HEK293T (cell line): ENCODE measurements at regions of chr12 and their contacts with region 1.

Region 1: GRCh38 chr12:116099652-116100432 is 177.7 kb downstream of the MED13L start:
- DNase-seq: no peak

Region 2: DNA sequence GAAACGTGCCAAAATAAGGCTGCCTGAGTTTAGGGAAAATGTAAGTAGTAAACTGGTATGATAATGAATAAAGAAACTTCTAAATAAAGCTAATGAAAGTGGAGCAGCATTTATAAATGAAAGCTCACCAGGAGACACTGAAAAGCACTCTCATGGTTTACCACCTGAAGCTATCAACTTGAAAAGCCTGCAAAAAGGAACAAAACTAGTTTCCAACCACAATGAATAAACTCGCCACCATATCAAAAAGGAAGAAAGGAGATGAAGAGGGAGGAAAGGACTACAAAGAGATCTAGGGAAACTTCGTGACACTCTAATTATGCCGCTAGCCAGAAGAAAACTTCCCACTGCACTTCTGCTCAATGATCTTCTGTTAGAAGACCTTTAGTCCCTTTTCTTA is 110.9 kb after region 1 on chr12:
- CTCF ChIA-PET with region 1: interaction called, 11 read pairs
- POLR2A ChIA-PET with region 1: no interaction called
- DNase-seq: no peak